OCI-LY7 (cell line): ENCODE measurements at regions of chr1 and their contacts with region 1.

Region 1: GRCh38 chr1:224274970-224275626 is 54.9 kb downstream of the NVL start:
- DNase-seq: no peak
- H3K4me3 ChIP-seq: no peak overlapping the region
- H3K27ac ChIP-seq: no peak overlapping the region
- H3K4me1 ChIP-seq: no peaks in the 10 kb centered on the region
- CTCF ChIP-seq: no peak

Region 2: DNA sequence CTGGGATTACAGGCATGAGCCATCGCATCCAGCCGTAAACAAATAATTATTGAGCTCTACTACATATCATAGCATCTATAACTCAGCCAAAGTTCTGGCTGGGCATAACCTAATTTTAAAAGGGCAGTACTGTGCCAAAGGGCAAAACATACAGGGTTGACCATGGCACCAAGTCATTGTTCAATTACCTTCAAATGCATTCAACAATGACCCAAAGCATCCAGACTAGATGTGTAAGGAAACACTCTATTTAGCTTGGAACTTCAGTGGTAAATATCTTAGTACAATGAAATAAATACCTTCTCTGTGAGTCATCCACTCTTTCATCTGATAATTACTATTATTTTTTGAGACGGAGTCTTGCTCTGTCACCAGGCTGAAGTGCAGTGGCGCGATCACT is 15.2 kb before region 1 on chr1:
- CTCF ChIA-PET with region 1: no interaction called
- POLR2A ChIA-PET with region 1: interaction called, 11 read pairs
- intact Hi-C with region 1: no loop called
- DNase-seq: no peak
- H3K4me3 ChIP-seq: no peak overlapping the region
- H3K27ac ChIP-seq: no peak overlapping the region
- H3K4me1 ChIP-seq: no peaks in the 10 kb centered on the region
- CTCF ChIP-seq: no peak